Mammary epithelial cell (primary cell): ENCODE measurements at regions of chr6 and their contacts with region 1.

Region 1: GRCh38 chr6:151323791-151324487 is 67.4 kb downstream of the ZBTB2 start:
- DNase-seq: peak; percentile 62
- H3K4me3 ChIP-seq: no peak overlapping the region
- H3K27ac ChIP-seq: no peak overlapping the region
- H3K4me1 ChIP-seq: peaks cover 22% of the 10 kb centered on the region
- H3K27me3 ChIP-seq: no peaks in the 10 kb centered on the region
- CTCF ChIP-seq: peak; percentile 95 to 98

Region 2: DNA sequence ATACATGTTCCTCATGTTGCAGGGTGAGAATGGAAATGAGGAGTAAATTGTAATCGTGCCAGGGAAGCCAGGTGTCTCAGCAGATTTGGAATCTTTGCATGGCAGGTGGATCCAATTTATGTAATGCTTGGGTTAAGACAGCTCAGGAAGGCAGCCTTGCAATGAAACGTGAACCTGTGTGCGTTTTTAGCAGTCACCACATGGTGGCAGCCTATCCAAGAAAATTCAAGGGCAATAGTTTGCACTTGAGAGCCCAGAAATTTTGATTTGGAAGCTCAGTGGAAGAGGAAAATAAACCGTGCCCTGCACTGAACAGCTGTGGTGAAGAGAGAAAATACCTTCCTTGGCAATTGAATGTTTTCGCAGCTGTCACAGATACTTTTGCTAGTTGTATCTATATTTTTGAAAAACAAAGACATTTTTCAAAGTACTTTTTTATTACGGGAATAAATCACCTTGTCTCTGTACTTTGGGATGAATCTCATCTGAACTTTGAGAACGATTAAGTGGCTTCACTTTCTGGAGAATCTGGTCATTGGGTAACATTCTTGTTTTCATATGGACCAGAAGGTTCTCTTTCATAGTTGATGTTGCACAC is 432.0 kb before region 1 on chr6:
- CTCF ChIA-PET with region 1: interaction called, 5 read pairs
- dilution Hi-C with region 1: loop called (anchors 10 kb)
- in situ Hi-C with region 1: no loop called
- intact Hi-C with region 1: loop called (anchors 1 kb)
- DNase-seq: peak; percentile 57
- H3K4me3 ChIP-seq: no peak overlapping the region
- H3K27ac ChIP-seq: no peak overlapping the region
- H3K4me1 ChIP-seq: peaks cover 7% of the 10 kb centered on the region
- H3K27me3 ChIP-seq: no peaks in the 10 kb centered on the region
- CTCF ChIP-seq: peak; percentile 84 to 90

Region 3: GRCh38 chr6:150905769-150906506 is 418.0 kb before region 1 on chr6:
- CTCF ChIA-PET with region 1: interaction called, 4 read pairs
- dilution Hi-C with region 1: no loop called
- in situ Hi-C with region 1: loop called in 1 of 2 experiments (anchors 25 kb)
- intact Hi-C with region 1: no loop called
- DNase-seq: no peak
- H3K4me3 ChIP-seq: no peak overlapping the region
- H3K27ac ChIP-seq: no peak overlapping the region
- H3K4me1 ChIP-seq: no peaks in the 10 kb centered on the region
- H3K27me3 ChIP-seq: no peaks in the 10 kb centered on the region
- CTCF ChIP-seq: peak; percentile 46 to 54

Region 4: GRCh38 chr6:150967910-150968309 is 356.0 kb before region 1 on chr6:
- CTCF ChIA-PET with region 1: interaction called, 11 read pairs
- dilution Hi-C with region 1: no loop called
- in situ Hi-C with region 1: no loop called
- intact Hi-C with region 1: no loop called
- DNase-seq: no peak
- H3K4me3 ChIP-seq: no peak overlapping the region
- H3K27ac ChIP-seq: no peak overlapping the region
- H3K4me1 ChIP-seq: no peaks in the 10 kb centered on the region
- H3K27me3 ChIP-seq: no peaks in the 10 kb centered on the region
- CTCF ChIP-seq: no peak

Region 5: DNA sequence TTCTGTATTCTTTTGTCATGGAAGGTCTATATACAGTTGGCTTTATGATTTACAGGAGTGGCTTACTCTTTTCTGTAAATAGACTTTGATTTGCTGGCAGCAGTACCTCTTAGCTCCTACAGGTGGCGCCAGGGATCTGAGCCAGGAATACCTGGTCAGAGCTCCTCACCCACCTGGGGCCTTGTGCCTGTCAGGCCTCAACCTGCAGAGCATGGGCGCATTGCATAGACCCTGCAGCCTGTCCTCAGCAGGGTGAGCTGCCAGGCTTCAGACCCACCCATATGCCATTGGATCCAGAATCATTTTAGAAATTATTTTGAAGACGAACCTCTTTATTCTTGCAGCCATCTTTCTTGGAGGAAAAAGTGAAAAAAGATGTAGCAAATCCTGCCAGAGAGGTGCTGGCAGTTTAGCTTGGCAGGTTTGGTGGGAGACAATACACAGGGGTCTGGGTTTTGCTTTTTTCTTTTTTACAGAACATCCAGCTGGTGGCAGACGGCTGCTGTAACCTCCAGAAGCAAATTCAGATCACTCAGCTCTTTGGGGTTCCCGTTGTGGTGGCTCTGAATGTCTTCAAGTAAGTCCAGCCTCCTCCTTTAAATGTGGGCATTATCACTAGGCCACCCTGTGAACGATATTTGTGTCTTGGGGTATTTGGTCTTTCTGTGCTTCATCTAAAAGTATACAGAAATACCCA is 309.4 kb before region 1 on chr6:
- CTCF ChIA-PET with region 1: interaction called, 27 read pairs
- dilution Hi-C with region 1: no loop called
- in situ Hi-C with region 1: loop called (anchors 5 kb)
- intact Hi-C with region 1: loop called (anchors 1 kb)
- DNase-seq: peak; percentile 53
- H3K4me3 ChIP-seq: no peak overlapping the region
- H3K27ac ChIP-seq: no peak overlapping the region
- H3K4me1 ChIP-seq: no peaks in the 10 kb centered on the region
- H3K27me3 ChIP-seq: no peaks in the 10 kb centered on the region
- CTCF ChIP-seq: peak; percentile 99

Region 6: DNA sequence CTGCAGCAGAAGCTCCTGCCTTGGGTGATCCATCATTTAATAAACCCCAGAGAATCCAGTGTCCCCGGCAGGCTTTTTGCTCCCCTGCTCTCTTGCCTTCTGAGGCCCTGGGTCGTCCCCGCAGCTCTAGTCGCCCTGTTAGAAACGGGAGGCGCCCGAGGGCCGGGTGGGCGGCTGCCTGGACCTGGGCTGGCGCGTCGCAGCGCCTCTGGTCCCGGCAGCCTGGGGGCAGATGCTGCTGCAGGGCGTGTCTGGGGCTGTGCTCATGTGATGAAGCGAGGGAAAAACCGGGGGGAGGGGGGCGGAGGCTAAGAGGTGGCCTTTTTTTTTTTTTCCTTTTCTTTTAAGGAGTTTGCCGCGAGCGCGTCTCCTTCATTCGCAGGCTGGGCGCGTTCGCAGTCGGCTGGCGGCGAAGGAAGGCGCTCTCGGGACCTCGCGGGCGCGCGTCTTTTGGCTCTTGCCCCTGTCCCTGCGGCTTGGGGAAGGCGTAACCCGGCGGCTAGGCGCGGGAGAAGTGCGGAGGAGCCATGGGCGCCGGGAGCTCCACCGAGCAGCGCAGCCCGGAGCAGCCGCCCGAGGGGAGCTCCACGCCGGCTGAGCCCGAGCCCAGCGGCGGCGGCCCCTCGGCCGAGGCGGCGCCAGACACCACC is 83.8 kb before region 1 on chr6:
- CTCF ChIA-PET with region 1: no interaction called
- dilution Hi-C with region 1: no loop called
- in situ Hi-C with region 1: no loop called
- intact Hi-C with region 1: loop called (anchors 2 kb)
- DNase-seq: peak; percentile 45
- H3K4me3 ChIP-seq: peak overlapping the region; percentile 60 to 77 (median 76)
- H3K27ac ChIP-seq: no peak overlapping the region
- H3K4me1 ChIP-seq: no peaks in the 10 kb centered on the region
- H3K27me3 ChIP-seq: no peaks in the 10 kb centered on the region
- CTCF ChIP-seq: no peak

Region 7: GRCh38 chr6:151349651-151350282 is 25.8 kb after region 1 on chr6:
- CTCF ChIA-PET with region 1: no interaction called
- dilution Hi-C with region 1: no loop called
- in situ Hi-C with region 1: no loop called
- intact Hi-C with region 1: no loop called
- DNase-seq: no peak
- H3K4me3 ChIP-seq: no peak overlapping the region
- H3K27ac ChIP-seq: no peak overlapping the region
- H3K4me1 ChIP-seq: no peaks in the 10 kb centered on the region
- H3K27me3 ChIP-seq: no peaks in the 10 kb centered on the region
- CTCF ChIP-seq: no peak